HepG2 (cell line): ENCODE measurements at regions of chr9 and their contacts with region 1.

Region 1: DNA sequence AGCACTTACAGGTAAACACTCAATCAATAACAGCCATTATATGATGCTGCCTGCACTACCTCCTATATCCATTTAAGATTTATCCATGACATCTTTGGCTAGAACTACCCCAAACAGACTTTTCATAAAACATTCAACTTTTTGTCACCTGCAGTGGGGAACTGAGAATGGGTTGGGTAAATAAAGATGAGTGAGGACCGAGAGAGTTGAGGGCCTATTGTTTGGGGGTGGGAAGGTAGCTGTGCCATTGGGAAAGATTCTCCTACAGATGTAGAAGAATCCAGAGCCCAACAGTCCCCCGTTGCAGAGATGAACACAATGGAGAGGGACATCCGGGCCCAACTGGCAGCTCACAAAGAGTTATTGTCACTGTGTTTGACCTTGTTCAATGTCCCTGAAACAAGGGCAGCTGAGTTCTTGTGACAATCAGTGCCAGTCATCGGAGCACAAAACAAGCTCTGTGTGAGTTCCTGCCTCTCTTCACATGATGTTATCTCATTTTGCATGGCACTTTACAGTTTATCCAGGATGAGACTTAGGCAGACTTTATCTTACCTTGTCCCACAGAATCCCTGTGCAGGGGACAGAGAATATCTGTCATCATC is 11.5 kb upstream of the SLC31A2 start:
- DNase-seq: peak; percentile 97
- ATAC-seq: peak; percentile 91
- H3K4me3 ChIP-seq: no peak overlapping the region
- H3K27ac ChIP-seq: peak overlapping the region; percentile 66
- H3K4me1 ChIP-seq: peaks cover 48% of the 10 kb centered on the region
- H3K27me3 ChIP-seq: peaks cover 0 to 15% of the 10 kb centered on the region in 2 experiments; a peak in 3 of 5 replicates
- CTCF ChIP-seq: no peak
- EP300 ChIP-seq: peak; percentile 69 to 83; a peak in 3 of 4 replicates
- POLR2A ChIP-seq: peak in 1 of 2 experiments; percentile 15; a peak in 1 of 4 replicates
- RAD21 ChIP-seq: no peak

Region 2: GRCh38 chr9:112361601-112362000 is 777.7 kb before region 1 on chr9:
- CTCF ChIA-PET with region 1: no interaction called
- POLR2A ChIA-PET with region 1: no interaction called
- in situ Hi-C with region 1: no loop called
- intact Hi-C with region 1: no loop called
- DNase-seq: peak; percentile 37
- ATAC-seq: peak; percentile 57
- H3K4me3 ChIP-seq: no peak overlapping the region
- H3K27ac ChIP-seq: no peak overlapping the region
- H3K4me1 ChIP-seq: peaks cover 6% of the 10 kb centered on the region
- H3K27me3 ChIP-seq: no peaks in the 10 kb centered on the region
- CTCF ChIP-seq: peak; percentile 56
- EP300 ChIP-seq: no peak
- POLR2A ChIP-seq: no peak
- RAD21 ChIP-seq: 0 out of 2 replicates have a peak, but pooled peaks have one; percentile 36

Region 3: DNA sequence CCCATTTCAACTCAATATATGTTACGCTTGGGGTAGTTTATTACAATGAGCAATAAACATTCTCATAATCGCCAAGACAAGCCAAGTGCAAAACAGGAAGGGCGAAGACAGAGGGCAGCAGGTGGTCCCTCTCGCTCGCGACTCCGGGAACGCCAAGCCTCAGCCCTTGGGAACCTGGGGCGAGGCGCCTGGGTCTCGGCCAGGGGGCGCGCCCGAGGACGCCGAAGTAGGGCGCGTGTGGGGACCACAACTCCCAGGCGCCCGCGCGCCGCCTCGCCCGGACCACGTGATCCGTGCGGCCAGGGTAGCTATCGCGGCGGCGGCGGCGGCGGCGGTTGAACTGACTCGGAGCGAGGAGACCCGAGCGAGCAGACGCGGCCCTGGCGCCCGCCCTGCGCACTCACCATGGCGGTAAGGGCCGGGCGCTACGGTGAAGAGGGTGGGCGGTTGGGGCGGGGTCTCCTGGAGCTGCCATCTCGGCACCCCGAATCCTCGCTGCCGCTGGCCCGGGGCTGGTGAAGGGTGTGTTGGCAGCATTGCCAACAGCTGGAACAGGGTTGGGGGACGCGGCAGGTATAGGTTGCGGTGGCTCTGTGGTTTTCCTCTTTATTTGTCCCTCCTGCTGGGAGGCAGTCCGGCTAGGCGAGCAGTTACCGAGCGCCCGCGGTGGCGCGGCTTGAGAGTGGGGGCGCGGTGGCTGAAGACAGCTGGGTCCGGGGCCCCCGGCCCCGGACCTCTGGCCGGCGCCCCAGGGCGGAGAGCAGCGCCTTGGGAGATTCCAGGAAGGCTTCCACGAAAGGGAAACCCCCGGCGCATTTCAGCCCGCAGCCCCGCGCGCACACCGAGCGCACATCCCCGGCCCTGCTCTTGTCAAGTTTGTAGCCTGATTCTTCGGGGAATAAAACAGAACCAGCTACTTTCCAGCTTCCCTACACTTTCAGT is 11.6 kb after region 1 on chr9 and contains the start of gene SLC31A2:
- CTCF ChIA-PET with region 1: no interaction called
- POLR2A ChIA-PET with region 1: interaction called, 20 read pairs
- in situ Hi-C with region 1: no loop called
- intact Hi-C with region 1: no loop called
- DNase-seq: peak; percentile 77
- ATAC-seq: peak; percentile 90
- H3K4me3 ChIP-seq: peak within 1 kb of the TSS; percentile 85 to 96 (median 91)
- H3K27ac ChIP-seq: peak within 1 kb of the TSS; percentile 54
- H3K4me1 ChIP-seq: peaks cover 74% of the 10 kb centered on the region
- H3K27me3 ChIP-seq: no peaks in the 10 kb centered on the region; a peak in 2 of 5 replicates
- CTCF ChIP-seq: peak; percentile 79
- EP300 ChIP-seq: no peak
- POLR2A ChIP-seq: peak; percentile 75 to 77
- RAD21 ChIP-seq: peak; percentile 73
- total RNA-seq, gene SLC31A2: 6.0 and 9.3 TPM in 2 replicates